Endothelial cell of umbilical vein (primary cell): ENCODE measurements at regions of chr1 and their contacts with region 1.

Region 1: DNA sequence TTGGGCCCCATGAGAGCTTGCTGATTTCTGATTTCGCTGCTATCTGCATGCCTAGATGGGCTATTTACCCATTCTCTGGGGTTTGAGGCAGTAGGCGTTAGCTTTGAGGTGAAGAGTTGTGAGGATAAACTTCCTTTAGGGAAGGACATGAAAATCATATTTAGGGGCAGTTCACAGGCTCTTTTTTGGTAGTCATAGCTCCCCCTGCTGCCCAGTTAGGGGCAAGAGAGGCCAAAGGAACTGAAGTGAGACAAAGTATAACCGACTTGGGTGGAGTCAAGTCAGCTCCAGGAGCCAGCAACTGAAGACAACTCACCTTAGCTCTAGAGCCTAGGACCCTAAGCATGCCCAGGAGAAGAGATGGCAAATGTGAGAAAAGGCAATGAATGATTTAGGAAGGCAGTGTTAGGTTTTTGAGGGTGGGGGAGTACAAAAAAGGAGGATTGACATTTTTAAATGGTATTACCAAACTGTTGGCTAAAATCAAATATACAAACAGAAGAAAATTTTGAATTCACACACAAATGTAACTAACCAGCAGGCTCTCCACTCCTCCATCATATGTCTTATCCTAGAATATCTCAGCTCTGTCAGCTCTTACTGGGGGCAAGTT is 625.2 kb downstream of the LMO4 start:
- DNase-seq: peak; percentile 71
- H3K4me3 ChIP-seq: no peak overlapping the region
- H3K27ac ChIP-seq: no peak overlapping the region
- H3K4me1 ChIP-seq: peaks cover 3% of the 10 kb centered on the region
- H3K27me3 ChIP-seq: no peaks in the 10 kb centered on the region
- CTCF ChIP-seq: peak; percentile 81 to 87
- POLR2A ChIP-seq: no peak

Region 2: GRCh38 chr1:87131809-87132283 is 822.0 kb before region 1 on chr1:
- CTCF ChIA-PET with region 1: interaction called, 6 read pairs
- POLR2A ChIA-PET with region 1: no interaction called
- dilution Hi-C with region 1: no loop called
- intact Hi-C with region 1: loop called (anchors 1 kb)
- DNase-seq: peak; percentile 70
- H3K4me3 ChIP-seq: peak overlapping the region in 2 of 3 experiments; percentile 16 to 37
- H3K27ac ChIP-seq: no peak overlapping the region
- H3K4me1 ChIP-seq: peaks cover 2% of the 10 kb centered on the region
- H3K27me3 ChIP-seq: peaks cover 0 to 13% of the 10 kb centered on the region in 2 experiments
- CTCF ChIP-seq: peak; percentile 94 to 96
- POLR2A ChIP-seq: no peak

Region 3: DNA sequence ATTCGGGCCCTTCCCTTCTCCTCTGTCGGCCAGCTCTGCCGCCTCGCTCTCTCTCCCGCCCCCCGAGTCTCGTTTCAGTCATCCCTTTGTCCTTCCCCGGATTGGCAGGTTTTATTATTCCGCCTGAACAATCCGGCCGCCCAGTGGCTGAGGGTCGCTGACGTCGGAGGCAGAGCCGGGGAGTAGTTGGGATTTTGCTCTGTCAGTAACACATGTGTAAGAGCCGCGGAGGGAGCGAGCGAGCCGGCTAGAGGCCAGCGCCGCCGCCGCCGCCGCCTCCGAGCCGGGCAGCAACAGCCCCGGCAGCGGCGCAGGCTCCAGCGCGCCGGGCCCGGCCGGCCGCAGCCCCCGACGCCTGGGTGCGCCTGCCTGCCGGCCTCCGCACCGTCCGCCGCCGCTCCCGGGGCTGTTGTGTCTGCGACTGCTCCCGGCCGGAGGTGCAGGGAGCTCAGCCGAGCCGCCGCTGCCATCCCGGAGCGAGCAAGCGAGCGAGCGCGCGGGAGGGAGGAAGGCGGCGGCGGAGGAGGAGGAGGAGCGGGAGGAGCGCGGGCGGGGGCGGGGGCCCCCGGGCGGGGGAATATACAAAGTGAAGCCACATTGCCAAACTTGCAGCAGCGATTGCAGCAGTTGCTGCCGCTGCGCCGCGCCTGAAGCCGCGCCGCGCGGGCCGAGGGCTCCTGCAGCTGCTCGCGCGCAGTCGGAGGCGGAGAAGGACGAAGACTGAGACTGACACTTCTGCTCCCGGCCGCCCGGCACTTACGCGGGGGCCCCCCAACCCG is 625.4 kb before region 1 on chr1 and contains the start of gene LMO4:
- CTCF ChIA-PET with region 1: interaction called, 28 read pairs
- POLR2A ChIA-PET with region 1: no interaction called
- dilution Hi-C with region 1: no loop called
- intact Hi-C with region 1: loop called (anchors 1 kb)
- DNase-seq: peak; percentile 97
- H3K4me3 ChIP-seq: peak within 1 kb of the TSS; percentile 86 to 95 (median 89)
- H3K27ac ChIP-seq: peak within 1 kb of the TSS; percentile 58
- H3K4me1 ChIP-seq: peaks cover 12% of the 10 kb centered on the region
- H3K27me3 ChIP-seq: peaks cover 0 to 3% of the 10 kb centered on the region in 2 experiments
- CTCF ChIP-seq: no peak
- POLR2A ChIP-seq: peak; percentile 50
- total RNA-seq, gene LMO4: 22.5 and 24.8 TPM in 2 replicates

Region 4: DNA sequence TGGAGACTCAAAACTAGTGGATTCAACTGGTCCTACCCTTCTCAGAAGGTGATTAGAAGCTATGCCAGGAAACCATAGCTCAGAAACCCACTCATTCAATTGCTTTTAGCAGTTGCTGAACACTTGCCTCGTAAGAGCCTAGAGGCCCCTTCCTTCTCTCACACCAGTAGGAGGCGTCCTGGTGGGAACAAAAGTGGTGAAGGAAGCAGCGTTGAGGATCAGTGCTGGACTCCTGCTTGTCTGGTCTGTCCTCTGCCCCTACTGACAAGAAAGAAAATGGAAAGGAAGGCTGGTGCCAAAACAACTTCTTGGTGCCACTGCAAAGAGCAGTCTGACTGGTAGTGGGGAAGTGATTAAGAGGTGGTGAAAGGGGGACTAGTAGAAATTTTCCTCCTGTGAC is 355.4 kb before region 1 on chr1:
- CTCF ChIA-PET with region 1: no interaction called
- POLR2A ChIA-PET with region 1: no interaction called
- dilution Hi-C with region 1: no loop called
- intact Hi-C with region 1: loop called (anchors 2 kb)
- DNase-seq: no peak
- H3K4me3 ChIP-seq: no peak overlapping the region
- H3K27ac ChIP-seq: no peak overlapping the region
- H3K4me1 ChIP-seq: no peaks in the 10 kb centered on the region
- H3K27me3 ChIP-seq: no peaks in the 10 kb centered on the region
- CTCF ChIP-seq: no peak
- POLR2A ChIP-seq: no peak

Region 5: DNA sequence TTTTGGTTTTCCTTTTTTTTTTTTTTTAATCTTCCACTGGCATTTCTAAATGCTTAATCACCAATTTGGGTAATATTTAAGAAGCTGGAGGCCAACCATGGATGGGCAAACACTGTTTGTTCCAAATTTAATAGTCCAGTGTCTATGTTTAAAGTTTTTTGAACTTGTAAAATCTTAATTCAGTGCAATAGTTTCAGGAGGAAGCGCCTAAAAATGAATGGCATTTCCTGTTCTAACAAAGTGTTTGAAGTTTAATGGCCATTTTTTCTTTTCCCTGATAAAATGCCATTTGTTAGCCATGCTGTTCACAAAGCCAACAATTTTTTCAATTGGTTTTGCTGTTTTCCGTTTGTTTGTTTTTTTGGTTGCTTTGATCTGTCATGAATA is 73.1 kb before region 1 on chr1:
- CTCF ChIA-PET with region 1: no interaction called
- POLR2A ChIA-PET with region 1: no interaction called
- dilution Hi-C with region 1: no loop called
- intact Hi-C with region 1: no loop called
- DNase-seq: peak; percentile 16
- H3K4me3 ChIP-seq: no peak overlapping the region
- H3K27ac ChIP-seq: no peak overlapping the region
- H3K4me1 ChIP-seq: peaks cover 10% of the 10 kb centered on the region
- H3K27me3 ChIP-seq: no peaks in the 10 kb centered on the region
- CTCF ChIP-seq: no peak
- POLR2A ChIP-seq: no peak

Region 6: GRCh38 chr1:87968197-87968955 is 14.5 kb after region 1 on chr1:
- CTCF ChIA-PET with region 1: interaction called, 35 read pairs
- POLR2A ChIA-PET with region 1: no interaction called
- dilution Hi-C with region 1: no loop called
- intact Hi-C with region 1: no loop called
- DNase-seq: peak; percentile 96
- H3K4me3 ChIP-seq: no peak overlapping the region
- H3K27ac ChIP-seq: peak overlapping the region; percentile 58
- H3K4me1 ChIP-seq: peaks cover 17% of the 10 kb centered on the region
- H3K27me3 ChIP-seq: no peaks in the 10 kb centered on the region
- CTCF ChIP-seq: no peak
- POLR2A ChIP-seq: no peak

Region 7: GRCh38 chr1:88595355-88596002 is 641.6 kb after region 1 on chr1:
- CTCF ChIA-PET with region 1: no interaction called
- POLR2A ChIA-PET with region 1: no interaction called
- dilution Hi-C with region 1: no loop called
- intact Hi-C with region 1: loop called (anchors 10 kb)
- DNase-seq: peak; percentile 63
- H3K4me3 ChIP-seq: no peak overlapping the region
- H3K27ac ChIP-seq: no peak overlapping the region
- H3K4me1 ChIP-seq: no peaks in the 10 kb centered on the region
- H3K27me3 ChIP-seq: no peaks in the 10 kb centered on the region
- CTCF ChIP-seq: peak; percentile 26 to 39
- POLR2A ChIP-seq: no peak